ENCODE measurements at regions of chr5 and their contacts with region 1.

Region 1: DNA sequence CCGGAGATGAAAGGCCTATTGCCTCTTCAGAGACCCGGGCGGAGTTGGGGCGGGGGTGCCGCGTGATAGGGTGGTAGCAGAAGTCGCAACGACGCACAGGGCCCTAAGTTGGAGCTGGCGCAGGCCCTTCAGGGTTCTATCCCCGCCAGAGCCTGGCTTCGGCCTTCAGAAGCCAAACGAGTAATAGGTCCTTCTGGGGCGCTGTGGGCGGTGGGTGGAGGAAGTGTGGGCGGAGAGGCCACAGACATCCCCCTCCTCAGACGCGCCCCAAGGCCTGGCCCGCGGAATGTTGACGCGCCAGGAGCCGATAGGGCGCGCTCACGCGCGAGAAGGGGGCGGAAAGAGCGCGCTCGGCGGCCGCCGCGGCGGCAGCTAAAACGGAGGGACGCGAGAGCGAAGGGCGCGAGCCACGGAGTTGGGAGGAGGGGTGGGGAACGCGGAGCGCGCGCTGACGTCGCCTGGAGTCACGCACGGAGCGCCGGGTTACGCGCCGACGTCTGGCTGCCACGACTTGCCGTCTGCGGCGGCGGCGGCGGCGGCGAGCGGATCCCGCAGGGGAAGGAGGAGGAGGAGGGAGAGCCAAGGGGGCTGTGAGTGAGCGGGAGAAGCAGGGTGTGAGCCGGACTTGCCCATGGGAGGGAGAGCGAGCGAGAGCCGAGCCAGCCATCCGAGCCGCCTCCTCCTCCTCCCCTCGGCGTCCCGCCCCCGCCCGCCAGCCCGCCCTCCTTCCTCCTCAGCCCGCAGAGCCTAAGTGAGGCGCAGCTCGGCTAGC is 6.4 kb upstream of the PURA start:
- DNase-seq: peak; percentile 95
- H3K4me3 ChIP-seq: peak overlapping the region; percentile 96
- H3K27ac ChIP-seq: peak overlapping the region; percentile 78
- H3K4me1 ChIP-seq: peaks cover 47% of the 10 kb centered on the region
- CTCF ChIP-seq: 0 out of 2 replicates have a peak, but pooled peaks have one; percentile 17

Region 2: GRCh38 chr5:140073296-140073695 is 34.2 kb before region 1 on chr5:
- CTCF ChIA-PET with region 1: no interaction called
- POLR2A ChIA-PET with region 1: no interaction called
- intact Hi-C with region 1: loop called (anchors 5 kb)
- DNase-seq: peak; percentile 41
- H3K4me3 ChIP-seq: no peak overlapping the region
- H3K27ac ChIP-seq: no peak overlapping the region
- H3K4me1 ChIP-seq: no peaks in the 10 kb centered on the region
- CTCF ChIP-seq: peak; percentile 96

Region 3: GRCh38 chr5:140401362-140402257 is 294.1 kb after region 1 on chr5 and contains the start of gene ANKHD1:
- CTCF ChIA-PET with region 1: no interaction called
- POLR2A ChIA-PET with region 1: no interaction called
- intact Hi-C with region 1: loop called (anchors 5 kb)
- DNase-seq: peak; percentile 100
- H3K4me3 ChIP-seq: peak within 1 kb of the TSS; percentile 92
- H3K27ac ChIP-seq: peak within 1 kb of the TSS; percentile 82
- H3K4me1 ChIP-seq: peaks cover 29% of the 10 kb centered on the region
- CTCF ChIP-seq: no peak
- total RNA-seq, gene ANKHD1: 90.6 and 91.5 TPM in 2 replicates

Measured in OCI-LY7 (cell line).